H1 (cell line): ENCODE measurements at regions of chr22 and their contacts with region 1.

Region 1: DNA sequence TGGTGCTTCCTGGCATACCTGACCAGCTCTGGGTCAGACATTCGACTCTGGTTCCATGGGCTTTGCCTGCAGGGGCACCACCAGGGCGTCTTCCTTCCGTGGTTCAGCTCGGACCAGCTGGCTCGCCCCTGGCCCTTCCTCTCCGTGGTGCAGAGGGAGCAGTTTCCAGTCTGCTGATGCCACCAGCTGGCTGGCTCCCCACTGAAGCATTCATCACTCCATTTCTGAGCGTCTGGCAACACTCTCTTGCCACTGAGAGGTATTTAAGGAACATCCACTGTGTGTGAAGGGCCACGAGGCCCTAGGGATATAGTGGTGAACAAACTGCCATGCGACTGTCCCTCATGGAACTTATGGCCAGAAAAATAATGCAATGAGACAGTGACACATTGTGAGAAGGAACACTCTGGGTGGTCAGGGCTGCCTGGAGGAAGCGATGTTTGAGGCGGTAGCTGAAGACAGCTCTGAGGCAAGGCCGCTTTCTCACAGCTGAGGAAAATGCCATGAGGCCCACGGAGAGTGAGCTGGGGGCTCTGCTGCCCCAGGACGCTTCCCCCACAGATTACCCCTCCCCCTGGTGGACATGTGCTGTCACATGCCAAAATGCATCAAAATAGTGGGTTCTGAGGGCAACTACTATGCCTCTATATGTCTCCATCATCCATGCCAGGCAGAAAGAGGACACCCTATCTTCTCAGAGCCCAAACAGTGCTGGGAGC is 44.9 kb upstream of the ARFGAP3 start:
- DNase-seq: no peak
- H3K4me3 ChIP-seq: no peak overlapping the region
- H3K27ac ChIP-seq: no peak overlapping the region
- H3K4me1 ChIP-seq: peaks cover 0 to 13% (median 6%) of the 10 kb centered on the region in 4 experiments; a peak in 5 of 7 replicates
- H3K27me3 ChIP-seq: no peaks in the 10 kb centered on the region
- CTCF ChIP-seq: peak; percentile 37 to 48 (median 42)
- EP300 ChIP-seq: no peak
- POLR2A ChIP-seq: no peak
- RAD21 ChIP-seq: peak in 1 of 2 experiments; percentile 37; a peak in 1 of 4 replicates

Region 2: GRCh38 chr22:42868751-42869251 is 33.1 kb before region 1 on chr22:
- CTCF ChIA-PET with region 1: interaction called, 12 read pairs
- POLR2A ChIA-PET with region 1: no interaction called
- DNase-seq: no peak
- H3K4me3 ChIP-seq: no peak overlapping the region
- H3K27ac ChIP-seq: no peak overlapping the region
- H3K4me1 ChIP-seq: no peaks in the 10 kb centered on the region
- H3K27me3 ChIP-seq: no peaks in the 10 kb centered on the region
- CTCF ChIP-seq: no peak
- EP300 ChIP-seq: no peak
- POLR2A ChIP-seq: no peak
- RAD21 ChIP-seq: no peak

Region 3: DNA sequence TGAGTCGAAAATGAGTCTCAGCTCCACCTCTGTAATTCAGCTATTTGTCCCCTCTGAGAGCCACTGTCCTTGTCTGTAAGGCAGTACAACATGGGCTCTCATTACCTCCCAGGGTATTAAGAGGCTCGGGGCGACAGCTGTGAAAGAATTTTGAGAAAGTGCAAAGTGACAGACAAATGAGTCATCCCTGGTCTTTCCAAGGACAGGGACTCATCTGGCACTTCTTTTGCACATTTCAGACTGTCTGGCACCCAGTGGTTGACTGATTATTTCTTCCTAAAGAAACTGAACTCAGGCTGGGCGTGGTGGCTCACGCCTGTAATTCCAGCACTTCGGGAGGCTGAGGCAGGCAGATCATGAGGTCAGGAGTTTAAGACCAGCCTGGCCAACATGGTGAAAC is 17.2 kb after region 1 on chr22:
- CTCF ChIA-PET with region 1: interaction called, 47 read pairs
- POLR2A ChIA-PET with region 1: interaction called, 4 read pairs
- DNase-seq: no peak
- H3K4me3 ChIP-seq: no peak overlapping the region
- H3K27ac ChIP-seq: no peak overlapping the region
- H3K4me1 ChIP-seq: peaks cover 13 to 26% (median 22%) of the 10 kb centered on the region in 4 experiments
- H3K27me3 ChIP-seq: no peaks in the 10 kb centered on the region
- CTCF ChIP-seq: no peak
- EP300 ChIP-seq: no peak
- POLR2A ChIP-seq: no peak
- RAD21 ChIP-seq: no peak

Region 4: DNA sequence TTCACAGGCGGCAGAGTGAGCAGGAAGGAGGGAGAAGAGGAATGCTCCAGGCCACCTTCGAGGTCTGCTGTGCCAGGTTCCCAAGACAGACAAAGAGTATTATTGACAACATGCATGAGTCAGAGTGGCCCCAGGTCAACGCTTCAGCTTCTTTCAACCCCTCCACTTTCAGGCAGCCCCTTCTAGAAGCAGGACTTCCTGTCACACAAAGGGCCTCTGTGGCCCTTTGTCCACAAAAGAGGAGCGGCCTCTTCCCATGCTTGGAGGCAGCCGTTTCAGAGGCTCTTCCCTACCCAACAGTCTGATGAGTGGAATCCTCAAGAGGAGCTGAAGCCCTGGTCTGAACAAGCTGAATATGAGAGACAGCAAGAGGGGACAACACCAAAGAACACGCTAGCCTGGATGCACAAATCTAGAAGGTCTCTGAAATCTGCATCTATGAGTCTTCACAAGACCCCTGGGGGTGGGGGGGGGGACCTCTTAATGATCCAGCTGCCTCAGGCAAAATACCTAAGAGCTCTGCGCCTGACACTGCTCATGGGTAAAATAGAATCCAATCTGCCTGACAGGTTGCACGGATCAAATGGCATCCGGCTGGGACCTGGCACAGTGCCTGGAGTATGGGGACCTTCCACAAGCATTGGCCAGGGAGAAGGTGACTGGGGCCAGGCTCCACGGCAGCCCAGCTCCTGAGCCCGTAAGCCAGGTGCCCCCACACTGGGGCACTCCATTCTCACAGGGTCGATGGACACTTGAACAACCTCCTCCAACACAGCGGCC is 45.5 kb after region 1 on chr22:
- CTCF ChIA-PET with region 1: interaction called, 16 read pairs
- POLR2A ChIA-PET with region 1: no interaction called
- DNase-seq: no peak
- H3K4me3 ChIP-seq: no peak overlapping the region
- H3K27ac ChIP-seq: no peak overlapping the region
- H3K4me1 ChIP-seq: peaks cover 0 to 15% (median 7%) of the 10 kb centered on the region in 4 experiments; a peak in 6 of 7 replicates
- H3K27me3 ChIP-seq: no peaks in the 10 kb centered on the region
- CTCF ChIP-seq: no peak
- EP300 ChIP-seq: no peak
- POLR2A ChIP-seq: no peak
- RAD21 ChIP-seq: no peak

Region 5: DNA sequence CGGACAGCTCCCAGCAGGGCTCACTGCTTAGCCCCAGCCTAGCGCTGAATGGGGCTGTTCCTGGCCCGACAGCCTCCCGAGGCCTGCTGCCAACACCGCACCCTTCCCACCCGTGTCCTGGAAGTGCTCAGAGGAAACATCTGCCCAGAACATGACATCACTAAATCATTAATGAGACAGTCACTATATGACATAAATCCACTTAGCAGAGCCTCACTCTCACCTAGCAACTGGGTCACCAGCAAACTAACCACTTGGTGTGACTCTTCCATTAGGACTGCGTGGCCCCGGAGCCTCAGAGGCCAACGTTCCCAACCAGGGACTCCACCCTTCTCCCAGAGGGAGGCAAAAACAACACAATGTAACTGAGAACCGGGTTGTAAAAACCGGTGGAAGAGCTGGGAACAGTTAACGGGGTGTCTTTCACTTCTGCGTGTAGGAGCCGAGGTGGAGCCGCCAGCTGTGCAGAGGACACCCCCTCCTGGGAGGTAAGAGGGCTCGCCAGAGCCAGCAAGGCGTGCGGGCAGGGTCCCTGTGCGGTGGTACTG is 134.4 kb after region 1 on chr22:
- CTCF ChIA-PET with region 1: interaction called, 15 read pairs
- POLR2A ChIA-PET with region 1: no interaction called
- DNase-seq: no peak
- H3K4me3 ChIP-seq: no peak overlapping the region
- H3K27ac ChIP-seq: no peak overlapping the region
- H3K4me1 ChIP-seq: no peaks in the 10 kb centered on the region; a peak in 2 of 7 replicates
- H3K27me3 ChIP-seq: no peaks in the 10 kb centered on the region
- CTCF ChIP-seq: no peak
- EP300 ChIP-seq: no peak
- POLR2A ChIP-seq: no peak
- RAD21 ChIP-seq: no peak